K562 (cell line): ENCODE measurements at regions of chr20 and their contacts with region 1.

Region 1: GRCh38 chr20:46089417-46090388 is at the start of gene NCOA5:
- DNase-seq: peak; percentile 92 to 96 (median 94)
- ATAC-seq: peak; percentile 95
- H3K4me3 ChIP-seq: peak within 1 kb of the TSS; percentile 65
- H3K27ac ChIP-seq: peak within 1 kb of the TSS; percentile 98
- H3K4me1 ChIP-seq: peaks cover 12 to 16% of the 10 kb centered on the region in 2 experiments
- H3K27me3 ChIP-seq: no peaks in the 10 kb centered on the region
- CTCF ChIP-seq: peak; percentile 40 to 69 (median 46); a peak in 5 of 6 replicates
- EP300 ChIP-seq: no peak
- POLR2A ChIP-seq: peak; percentile 90
- RAD21 ChIP-seq: peak; percentile 19 to 39; a peak in 2 of 4 replicates
- polyA plus RNA-seq, gene NCOA5: 3.9 to 4.3 TPM

Region 2: GRCh38 chr20:45971675-45972499 is 117.8 kb before region 1 on chr20 and contains the start of gene ZNF335:
- CTCF ChIA-PET with region 1: no interaction called
- POLR2A ChIA-PET with region 1: interaction called, 3 read pairs
- in situ Hi-C with region 1: no loop called
- intact Hi-C with region 1: loop called (anchors 5 kb)
- DNase-seq: peak; percentile 98 to 99 (median 99)
- ATAC-seq: peak; percentile 82
- H3K4me3 ChIP-seq: peak within 1 kb of the TSS; percentile 82
- H3K27ac ChIP-seq: peak within 1 kb of the TSS; percentile 100
- H3K4me1 ChIP-seq: peaks cover 9 to 36% of the 10 kb centered on the region in 2 experiments; a peak in 4 of 5 replicates
- H3K27me3 ChIP-seq: no peaks in the 10 kb centered on the region
- CTCF ChIP-seq: peak in 1 of 3 experiments; percentile 26; a peak in 2 of 6 replicates
- EP300 ChIP-seq: peak; percentile 12; the same call in 1 of the 2 replicates
- POLR2A ChIP-seq: peak; percentile 71; the same call in 1 of the 2 replicates
- RAD21 ChIP-seq: no peak; a peak in 1 of 4 replicates
- polyA plus RNA-seq, gene ZNF335: 0.39 to 0.50 TPM

Region 3: DNA sequence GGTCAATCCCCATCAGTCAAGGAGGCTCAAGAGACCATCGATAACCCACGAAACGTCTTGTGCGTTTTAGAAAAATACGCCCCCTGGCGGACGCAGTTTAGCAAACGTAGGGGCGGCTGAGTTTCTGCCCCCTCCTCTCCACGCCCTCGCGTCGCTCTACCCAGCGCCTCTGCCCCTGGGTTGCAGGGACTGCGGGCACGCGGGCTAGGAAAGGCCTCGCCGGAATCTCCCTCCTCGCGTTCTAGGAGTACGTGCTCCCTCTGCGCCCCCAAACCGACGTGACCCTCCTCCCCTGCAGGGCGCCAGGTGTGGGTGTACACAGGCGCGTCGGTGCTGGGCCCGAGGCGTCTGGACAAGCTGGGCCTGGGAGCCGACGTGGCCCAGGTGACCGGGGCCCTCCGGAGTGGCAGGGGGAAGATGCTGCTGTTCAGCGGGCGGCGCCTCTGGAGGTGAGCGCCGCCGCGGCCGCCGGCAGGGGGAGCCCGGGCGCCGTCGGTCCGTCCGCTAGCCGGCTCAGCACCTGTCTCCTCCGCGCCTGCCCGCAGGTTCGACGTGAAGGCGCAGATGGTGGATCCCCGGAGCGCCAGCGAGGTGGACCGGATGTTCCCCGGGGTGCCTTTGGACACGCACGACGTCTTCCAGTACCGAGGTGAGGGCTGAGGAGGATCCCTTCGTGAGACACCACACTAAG is 75.7 kb before region 1 on chr20:
- CTCF ChIA-PET with region 1: interaction called, 18 read pairs
- POLR2A ChIA-PET with region 1: interaction called, 4 read pairs
- in situ Hi-C with region 1: no loop called
- intact Hi-C with region 1: no loop called
- DNase-seq: peak; percentile 77 to 86 (median 79)
- ATAC-seq: peak; percentile 90
- H3K4me3 ChIP-seq: peak overlapping the region; percentile 38
- H3K27ac ChIP-seq: no peak overlapping the region
- H3K4me1 ChIP-seq: peaks cover 0 to 37% of the 10 kb centered on the region in 2 experiments; a peak in 2 of 5 replicates
- H3K27me3 ChIP-seq: peaks cover 11 to 25% of the 10 kb centered on the region in 2 experiments; a peak in 4 of 5 replicates
- CTCF ChIP-seq: peak; percentile 73 to 92 (median 90)
- EP300 ChIP-seq: no peak
- POLR2A ChIP-seq: no peak
- RAD21 ChIP-seq: peak; percentile 40 to 66; a peak in 3 of 4 replicates

Region 4: DNA sequence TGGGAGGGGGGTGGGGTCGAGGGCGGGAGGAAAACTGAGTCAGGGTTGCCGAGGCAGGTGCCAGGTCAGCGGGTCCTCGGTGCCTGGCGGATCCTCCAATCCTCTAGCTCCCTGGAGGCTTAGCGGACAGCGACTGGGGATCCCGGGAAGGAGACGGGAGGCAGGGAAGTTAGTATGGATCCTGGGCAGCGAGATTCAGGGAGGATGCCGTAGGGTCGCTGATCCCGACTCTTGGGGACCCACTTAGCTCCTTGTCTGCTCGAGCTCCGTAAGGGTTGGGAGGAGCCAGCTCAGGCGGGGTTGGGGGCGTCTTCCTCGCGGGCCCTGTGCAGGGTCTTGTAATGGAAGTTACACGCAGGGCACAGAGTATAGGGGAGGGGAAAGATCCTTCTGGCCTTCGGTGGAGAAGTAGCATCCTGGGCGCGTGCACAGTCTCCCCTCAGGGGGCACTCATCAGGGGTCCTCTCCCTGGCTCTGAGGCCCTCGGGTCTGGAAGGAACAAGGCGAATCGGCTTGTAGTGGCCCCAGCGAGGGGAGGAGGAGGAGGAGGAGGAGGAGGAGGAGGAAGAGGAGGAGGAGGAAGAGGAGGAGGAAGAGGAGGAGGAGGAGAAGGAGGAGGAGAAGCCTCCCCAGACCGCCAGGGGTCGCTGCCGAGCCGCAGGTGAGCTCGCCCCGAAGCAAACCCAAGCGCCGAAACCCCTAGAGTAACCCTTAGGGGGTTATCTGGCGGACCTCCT is 67.1 kb before region 1 on chr20:
- CTCF ChIA-PET with region 1: interaction called, 5 read pairs
- POLR2A ChIA-PET with region 1: interaction called, 5 read pairs
- in situ Hi-C with region 1: no loop called
- intact Hi-C with region 1: loop called (anchors 2 kb)
- DNase-seq: peak; percentile 74 to 78 (median 76)
- ATAC-seq: peak; percentile 63
- H3K4me3 ChIP-seq: peak overlapping the region; percentile 78; the same call in 1 of the 2 replicates
- H3K27ac ChIP-seq: no peak overlapping the region
- H3K4me1 ChIP-seq: peaks cover 14 to 23% of the 10 kb centered on the region in 2 experiments
- H3K27me3 ChIP-seq: 0 out of 5 replicates have a peak, but pooled peaks cover 0 to 7% of the 10 kb centered on the region in 2 experiments
- CTCF ChIP-seq: peak; percentile 71 to 85 (median 85)
- EP300 ChIP-seq: no peak
- POLR2A ChIP-seq: no peak
- RAD21 ChIP-seq: peak; percentile 47 to 76

Region 5: GRCh38 chr20:46057856-46058598 is 31.7 kb before region 1 on chr20:
- CTCF ChIA-PET with region 1: no interaction called
- POLR2A ChIA-PET with region 1: interaction called, 10 read pairs
- in situ Hi-C with region 1: no loop called
- intact Hi-C with region 1: no loop called
- DNase-seq: no peak
- ATAC-seq: no peak
- H3K4me3 ChIP-seq: no peak overlapping the region
- H3K27ac ChIP-seq: no peak overlapping the region
- H3K4me1 ChIP-seq: peaks cover 0 to 14% of the 10 kb centered on the region in 2 experiments; a peak in 2 of 5 replicates
- H3K27me3 ChIP-seq: peaks cover 0 to 2% of the 10 kb centered on the region in 2 experiments; a peak in 1 of 5 replicates
- CTCF ChIP-seq: no peak
- EP300 ChIP-seq: no peak
- POLR2A ChIP-seq: no peak
- RAD21 ChIP-seq: no peak

Region 6: GRCh38 chr20:46078954-46079353 is 10.7 kb before region 1 on chr20:
- CTCF ChIA-PET with region 1: no interaction called
- POLR2A ChIA-PET with region 1: interaction called, 18 read pairs
- in situ Hi-C with region 1: no loop called
- intact Hi-C with region 1: no loop called
- DNase-seq: no peak
- ATAC-seq: no peak
- H3K4me3 ChIP-seq: no peak overlapping the region
- H3K27ac ChIP-seq: no peak overlapping the region
- H3K4me1 ChIP-seq: peaks cover 0 to 7% of the 10 kb centered on the region in 2 experiments; a peak in 2 of 5 replicates
- H3K27me3 ChIP-seq: no peaks in the 10 kb centered on the region
- CTCF ChIP-seq: no peak
- EP300 ChIP-seq: no peak
- POLR2A ChIP-seq: no peak
- RAD21 ChIP-seq: no peak

Region 7: DNA sequence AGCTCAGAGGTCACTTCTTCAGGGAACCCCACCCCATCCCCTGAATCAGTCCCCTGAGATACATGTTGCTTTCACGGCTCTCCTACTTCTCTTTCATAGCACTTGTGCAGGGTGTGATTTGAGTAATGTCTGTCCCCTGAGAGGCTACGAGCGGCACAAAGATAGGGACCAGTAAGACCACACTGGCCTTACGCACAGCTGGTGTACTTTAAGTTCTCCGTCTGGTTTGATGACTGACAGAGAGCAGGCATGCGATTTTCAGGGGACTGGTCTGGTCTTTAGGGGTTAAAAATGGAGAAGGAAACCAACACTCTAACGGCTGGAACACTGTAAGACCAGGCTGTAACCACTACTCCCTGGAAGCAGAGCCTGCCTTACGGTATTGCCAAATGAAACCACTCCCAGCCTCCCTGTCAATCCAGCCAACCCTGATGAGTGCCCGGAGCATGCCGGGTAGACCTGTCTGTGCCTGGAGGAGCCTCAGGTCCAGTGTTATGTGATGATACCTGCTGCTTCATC is 269.6 kb after region 1 on chr20:
- CTCF ChIA-PET with region 1: no interaction called
- POLR2A ChIA-PET with region 1: no interaction called
- in situ Hi-C with region 1: no loop called
- intact Hi-C with region 1: no loop called
- DNase-seq: no peak
- ATAC-seq: no peak
- H3K4me3 ChIP-seq: no peak overlapping the region
- H3K27ac ChIP-seq: no peak overlapping the region
- H3K4me1 ChIP-seq: peaks cover 4 to 36% of the 10 kb centered on the region in 2 experiments; a peak in 4 of 5 replicates
- H3K27me3 ChIP-seq: no peaks in the 10 kb centered on the region
- CTCF ChIP-seq: no peak
- EP300 ChIP-seq: no peak
- POLR2A ChIP-seq: no peak
- RAD21 ChIP-seq: no peak